HepG2 (cell line): ENCODE measurements at regions of chr2 and their contacts with region 1.

Region 1: DNA sequence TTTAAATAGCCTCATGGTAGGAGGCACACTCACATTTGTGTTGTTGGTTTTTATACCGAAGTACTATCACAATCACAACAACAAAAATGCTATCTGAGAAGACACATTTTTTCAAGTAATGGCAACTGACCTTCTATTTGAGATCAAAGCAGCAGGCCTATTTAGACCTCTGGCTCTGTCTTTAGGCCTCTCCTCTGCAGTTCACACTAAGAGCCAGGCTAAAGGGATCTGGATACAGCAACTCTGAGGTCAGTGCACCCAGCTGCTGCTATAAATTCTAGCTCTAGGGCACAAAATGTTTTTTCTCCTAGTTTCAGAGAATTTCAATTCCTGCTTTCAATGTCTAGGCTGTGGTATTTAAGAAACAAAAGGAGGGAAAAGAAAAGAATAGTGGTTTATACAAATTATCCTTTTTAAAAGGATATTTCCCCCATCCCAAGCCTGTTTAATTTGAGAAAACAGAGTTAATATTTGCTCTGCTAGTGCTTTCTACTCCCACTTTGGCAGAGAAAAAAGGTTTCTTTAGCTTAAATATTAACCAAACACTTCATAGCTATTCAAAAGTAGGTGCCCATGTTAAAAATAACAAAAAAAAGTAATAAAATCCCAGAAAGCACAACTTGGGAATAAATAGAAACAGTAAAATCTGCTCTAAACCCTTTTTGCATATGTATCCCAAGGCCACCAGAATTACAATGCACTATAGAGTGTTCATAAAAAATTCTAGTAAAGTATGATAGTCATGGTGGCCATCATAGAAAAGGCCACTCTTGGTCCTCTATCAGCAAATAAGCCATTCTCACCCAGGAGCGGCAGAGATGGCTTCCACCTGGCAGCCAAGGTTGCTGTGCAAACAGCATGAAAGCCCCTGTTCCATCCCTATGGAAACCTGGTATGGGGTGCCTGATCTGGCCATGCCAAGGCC is 293.6 kb upstream of the SESTD1 start:
- DNase-seq: peak; percentile 85
- ATAC-seq: peak; percentile 97
- H3K4me3 ChIP-seq: peak overlapping the region in 2 of 3 experiments; percentile 8 to 36; a peak in 2 of 6 replicates
- H3K27ac ChIP-seq: peak overlapping the region; percentile 84
- H3K4me1 ChIP-seq: peaks cover 69% of the 10 kb centered on the region
- H3K27me3 ChIP-seq: no peaks in the 10 kb centered on the region
- CTCF ChIP-seq: no peak
- EP300 ChIP-seq: peak in 1 of 2 experiments; percentile 67; a peak in 2 of 4 replicates
- POLR2A ChIP-seq: no peak
- RAD21 ChIP-seq: no peak

Region 2: GRCh38 chr2:179322289-179322688 is 236.0 kb before region 1 on chr2:
- CTCF ChIA-PET with region 1: no interaction called
- POLR2A ChIA-PET with region 1: no interaction called
- in situ Hi-C with region 1: no loop called
- intact Hi-C with region 1: no loop called
- DNase-seq: peak; percentile 49
- ATAC-seq: peak; percentile 67
- H3K4me3 ChIP-seq: no peak overlapping the region
- H3K27ac ChIP-seq: no peak overlapping the region
- H3K4me1 ChIP-seq: peaks cover 9% of the 10 kb centered on the region
- H3K27me3 ChIP-seq: peaks cover 0 to under 1% of the 10 kb centered on the region in 2 experiments; a peak in 1 of 5 replicates
- CTCF ChIP-seq: no peak
- EP300 ChIP-seq: peak in 1 of 2 experiments; percentile 33; a peak in 1 of 4 replicates
- POLR2A ChIP-seq: no peak
- RAD21 ChIP-seq: no peak

Region 3: DNA sequence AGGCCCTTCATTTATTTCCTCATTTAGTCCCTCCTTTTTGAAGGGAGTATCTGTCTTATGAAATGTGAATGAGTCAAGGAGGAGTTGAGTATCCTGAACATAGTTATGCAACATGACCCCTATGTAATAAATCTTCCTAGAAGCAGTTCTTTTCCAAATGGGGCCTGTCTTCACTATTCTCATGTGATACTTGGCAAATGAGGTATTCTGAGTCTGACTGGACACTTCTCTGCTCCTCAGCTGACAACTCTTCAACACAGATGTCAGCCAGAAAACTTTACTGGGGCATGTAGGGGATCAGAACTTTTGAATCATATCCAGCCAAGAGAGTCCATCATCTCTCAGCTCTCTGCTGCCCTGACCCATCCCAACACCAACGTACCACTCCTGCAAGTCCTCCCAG is 11.6 kb after region 1 on chr2:
- CTCF ChIA-PET with region 1: no interaction called
- POLR2A ChIA-PET with region 1: interaction called, 6 read pairs
- in situ Hi-C with region 1: no loop called
- intact Hi-C with region 1: loop called (anchors 2 kb)
- DNase-seq: no peak
- ATAC-seq: no peak
- H3K4me3 ChIP-seq: no peak overlapping the region
- H3K27ac ChIP-seq: no peak overlapping the region
- H3K4me1 ChIP-seq: peaks cover 57% of the 10 kb centered on the region
- H3K27me3 ChIP-seq: no peaks in the 10 kb centered on the region
- CTCF ChIP-seq: no peak
- EP300 ChIP-seq: no peak
- POLR2A ChIP-seq: no peak
- RAD21 ChIP-seq: no peak

Region 4: DNA sequence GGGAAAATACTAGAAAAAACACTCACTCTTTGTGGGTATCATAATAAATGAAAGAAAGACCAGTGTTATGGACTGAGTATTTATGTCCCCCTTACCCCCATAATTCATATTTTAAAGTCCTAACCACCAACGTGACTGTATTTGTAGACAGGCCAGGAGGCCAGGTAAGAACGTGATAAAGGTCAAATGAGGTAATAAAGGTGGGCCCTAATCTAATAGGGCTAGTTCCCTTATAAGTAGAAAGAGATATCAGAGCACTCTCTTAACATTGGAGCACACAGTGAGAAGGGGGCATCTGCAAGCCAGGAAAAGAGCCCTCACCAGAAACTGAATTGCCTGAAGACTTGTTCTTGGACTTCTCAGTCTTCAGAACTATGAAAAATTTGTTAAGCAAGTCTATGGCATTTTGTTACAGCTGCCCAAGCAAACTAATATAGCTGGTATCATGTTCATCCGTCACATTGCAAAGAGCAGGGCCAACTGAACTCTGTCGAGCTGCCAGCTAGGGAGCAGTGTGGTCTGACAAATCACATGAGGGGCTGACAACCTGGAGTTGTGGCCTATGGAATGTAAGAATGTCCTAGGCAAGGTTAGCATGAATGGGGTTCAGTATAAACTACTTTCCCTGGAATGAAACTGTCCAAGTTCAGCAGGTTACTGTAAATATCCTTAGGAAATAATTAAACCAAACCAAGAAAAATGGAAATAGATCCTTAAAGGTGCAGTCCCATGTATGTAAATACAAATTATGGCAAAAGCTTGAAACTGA is 22.3 kb after region 1 on chr2:
- CTCF ChIA-PET with region 1: no interaction called
- POLR2A ChIA-PET with region 1: interaction called, 25 read pairs
- in situ Hi-C with region 1: no loop called
- intact Hi-C with region 1: loop called (anchors 2 kb)
- DNase-seq: peak; percentile 91
- ATAC-seq: peak; percentile 98
- H3K4me3 ChIP-seq: no peak overlapping the region
- H3K27ac ChIP-seq: peak overlapping the region; percentile 64
- H3K4me1 ChIP-seq: peaks cover 56% of the 10 kb centered on the region
- H3K27me3 ChIP-seq: no peaks in the 10 kb centered on the region
- CTCF ChIP-seq: peak; percentile 73
- EP300 ChIP-seq: peak in 1 of 2 experiments; percentile 65; a peak in 2 of 4 replicates
- POLR2A ChIP-seq: peak; percentile 41 to 74; a peak in 3 of 4 replicates
- RAD21 ChIP-seq: 0 out of 2 replicates have a peak, but pooled peaks have one; percentile 45